ENCODE measurements at regions of chr17 and their contacts with region 1.

Region 1: DNA sequence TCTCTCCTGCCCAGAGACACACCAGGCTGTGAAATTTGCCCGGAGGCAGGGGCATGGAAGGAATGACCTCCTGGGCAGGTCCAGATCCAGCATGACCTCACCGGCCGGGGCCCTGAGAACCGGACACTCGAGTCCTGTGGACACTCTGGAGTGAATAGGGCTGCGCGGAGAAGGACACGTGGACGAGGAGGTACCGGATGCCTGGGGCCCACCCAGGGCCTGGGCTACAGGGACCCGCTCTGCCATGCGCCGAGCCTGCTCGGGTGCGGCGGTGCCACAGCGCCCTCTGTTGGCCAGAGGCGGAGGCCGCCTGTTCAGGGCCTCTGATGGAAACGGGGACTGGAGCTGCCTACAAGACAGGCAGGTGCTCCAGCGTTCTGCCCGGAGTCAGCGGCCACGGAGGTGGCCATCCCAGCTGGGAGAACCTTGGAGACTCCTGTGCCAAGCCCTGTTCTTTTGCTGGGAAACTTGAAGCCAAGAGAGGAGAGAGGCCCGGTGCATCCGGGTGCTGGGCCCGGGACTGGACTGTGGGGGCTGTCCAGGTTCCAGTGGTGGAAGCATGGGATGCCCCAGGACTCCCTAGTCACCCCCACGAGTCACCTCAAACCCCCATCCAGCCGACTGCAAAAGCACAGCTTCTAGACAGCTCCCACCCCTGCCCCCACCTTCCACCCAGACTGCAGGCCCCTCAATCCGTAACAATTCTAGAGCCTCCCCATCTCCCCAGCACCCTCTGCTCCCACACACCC is 19.3 kb upstream of the NXPH3 start:
- DNase-seq: no peak
- ATAC-seq: peak; percentile 99
- H3K4me3 ChIP-seq: no peak overlapping the region
- H3K27ac ChIP-seq: no peak overlapping the region
- H3K4me1 ChIP-seq: peaks cover 4% of the 10 kb centered on the region; the same call in 1 of the 2 replicates
- H3K27me3 ChIP-seq: no peaks in the 10 kb centered on the region
- CTCF ChIP-seq: peak; percentile 95 to 97 (median 96); a peak in 5 of 6 replicates
- EP300 ChIP-seq: no peak
- POLR2A ChIP-seq: no peak
- RAD21 ChIP-seq: peak; percentile 93

Region 2: GRCh38 chr17:49334744-49335512 is 221.5 kb before region 1 on chr17:
- CTCF ChIA-PET with region 1: no interaction called
- POLR2A ChIA-PET with region 1: no interaction called
- RAD21 ChIA-PET with region 1: no interaction called
- SMC1A ChIA-PET with region 1: no interaction called
- in situ Hi-C with region 1: no loop called
- intact Hi-C with region 1: no loop called
- DNase-seq: no peak
- ATAC-seq: no peak
- H3K4me3 ChIP-seq: no peak overlapping the region
- H3K27ac ChIP-seq: no peak overlapping the region
- H3K4me1 ChIP-seq: no peaks in the 10 kb centered on the region; the same call in 1 of the 2 replicates
- H3K27me3 ChIP-seq: no peaks in the 10 kb centered on the region
- CTCF ChIP-seq: no peak
- EP300 ChIP-seq: no peak
- POLR2A ChIP-seq: no peak
- RAD21 ChIP-seq: no peak

Region 3: GRCh38 chr17:49399995-49400394 is 156.4 kb before region 1 on chr17:
- CTCF ChIA-PET with region 1: interaction called, 119 read pairs
- POLR2A ChIA-PET with region 1: no interaction called
- RAD21 ChIA-PET with region 1: interaction called, 4 read pairs
- SMC1A ChIA-PET with region 1: no interaction called
- in situ Hi-C with region 1: loop called (anchors 10 kb)
- intact Hi-C with region 1: no loop called
- DNase-seq: no peak
- ATAC-seq: no peak
- H3K4me3 ChIP-seq: no peak overlapping the region
- H3K27ac ChIP-seq: no peak overlapping the region
- H3K4me1 ChIP-seq: peaks cover 6% of the 10 kb centered on the region
- H3K27me3 ChIP-seq: no peaks in the 10 kb centered on the region
- CTCF ChIP-seq: no peak
- EP300 ChIP-seq: no peak
- POLR2A ChIP-seq: no peak
- RAD21 ChIP-seq: no peak

Region 4: GRCh38 chr17:49425004-49425286 is 131.5 kb before region 1 on chr17:
- CTCF ChIA-PET with region 1: interaction called, 18 read pairs
- POLR2A ChIA-PET with region 1: no interaction called
- RAD21 ChIA-PET with region 1: no interaction called
- SMC1A ChIA-PET with region 1: no interaction called
- in situ Hi-C with region 1: no loop called
- intact Hi-C with region 1: no loop called
- DNase-seq: no peak
- ATAC-seq: no peak
- H3K4me3 ChIP-seq: no peak overlapping the region
- H3K27ac ChIP-seq: no peak overlapping the region
- H3K4me1 ChIP-seq: no peaks in the 10 kb centered on the region
- H3K27me3 ChIP-seq: no peaks in the 10 kb centered on the region
- CTCF ChIP-seq: no peak
- EP300 ChIP-seq: no peak
- POLR2A ChIP-seq: no peak
- RAD21 ChIP-seq: no peak

Region 5: GRCh38 chr17:49508061-49508865 is 48.1 kb before region 1 on chr17:
- CTCF ChIA-PET with region 1: interaction called, 10 read pairs
- POLR2A ChIA-PET with region 1: no interaction called
- RAD21 ChIA-PET with region 1: interaction called, 4 read pairs
- SMC1A ChIA-PET with region 1: no interaction called
- in situ Hi-C with region 1: no loop called
- intact Hi-C with region 1: no loop called
- DNase-seq: no peak
- ATAC-seq: peak; percentile 19; the same call in 2 of the 3 replicates
- H3K4me3 ChIP-seq: no peak overlapping the region
- H3K27ac ChIP-seq: no peak overlapping the region
- H3K4me1 ChIP-seq: no peaks in the 10 kb centered on the region
- H3K27me3 ChIP-seq: no peaks in the 10 kb centered on the region; a peak in 2 of 4 replicates
- CTCF ChIP-seq: no peak
- EP300 ChIP-seq: no peak
- POLR2A ChIP-seq: no peak
- RAD21 ChIP-seq: no peak

Region 6: GRCh38 chr17:49694847-49695683 is 138.7 kb after region 1 on chr17:
- CTCF ChIA-PET with region 1: interaction called, 37 read pairs
- POLR2A ChIA-PET with region 1: no interaction called
- RAD21 ChIA-PET with region 1: interaction called, 9 read pairs
- SMC1A ChIA-PET with region 1: interaction called, 10 read pairs
- in situ Hi-C with region 1: no loop called
- intact Hi-C with region 1: no loop called
- DNase-seq: no peak
- ATAC-seq: peak; percentile 71
- H3K4me3 ChIP-seq: no peak overlapping the region
- H3K27ac ChIP-seq: no peak overlapping the region
- H3K4me1 ChIP-seq: peaks cover 17% of the 10 kb centered on the region
- H3K27me3 ChIP-seq: no peaks in the 10 kb centered on the region
- CTCF ChIP-seq: peak; percentile 75 to 95 (median 93)
- EP300 ChIP-seq: no peak
- POLR2A ChIP-seq: no peak
- RAD21 ChIP-seq: peak; percentile 98

Region 7: DNA sequence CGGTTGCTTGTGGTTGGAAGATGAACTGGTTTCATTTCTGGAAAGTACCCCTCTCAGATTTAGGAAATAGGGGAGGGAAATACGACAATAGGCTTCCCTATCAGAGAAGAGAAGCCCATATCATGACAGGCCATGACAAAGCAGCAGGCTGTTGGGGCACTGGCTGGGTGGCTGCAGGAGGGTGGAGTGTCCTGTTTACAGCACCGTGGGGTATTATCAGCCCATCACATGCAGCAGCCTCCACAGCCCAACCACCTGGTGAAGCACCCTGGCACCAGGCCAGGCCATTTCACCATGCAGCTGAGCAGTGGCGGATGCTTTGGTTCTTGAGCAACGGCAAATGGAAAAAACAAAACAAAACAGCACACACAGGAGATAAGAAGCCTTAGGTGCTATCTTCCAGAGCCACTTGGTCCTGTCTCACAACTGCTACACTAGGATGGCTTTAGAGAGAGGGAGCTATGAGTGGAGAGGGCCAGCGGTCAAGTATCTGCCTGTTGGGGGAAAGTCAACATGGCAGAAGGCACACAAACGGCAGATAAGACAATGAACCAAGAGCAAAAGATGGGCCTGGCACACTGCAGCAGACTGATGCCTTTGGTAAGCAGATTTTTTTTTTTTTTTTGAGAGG is 183.4 kb after region 1 on chr17:
- CTCF ChIA-PET with region 1: no interaction called
- POLR2A ChIA-PET with region 1: no interaction called
- RAD21 ChIA-PET with region 1: no interaction called
- SMC1A ChIA-PET with region 1: no interaction called
- in situ Hi-C with region 1: no loop called
- intact Hi-C with region 1: no loop called
- DNase-seq: no peak
- ATAC-seq: peak; percentile 77
- H3K4me3 ChIP-seq: peak overlapping the region; percentile 31; the same call in 1 of the 2 replicates
- H3K27ac ChIP-seq: peak overlapping the region; percentile 79
- H3K4me1 ChIP-seq: peaks cover 44% of the 10 kb centered on the region
- H3K27me3 ChIP-seq: no peaks in the 10 kb centered on the region
- CTCF ChIP-seq: no peak
- EP300 ChIP-seq: 0 out of 4 replicates have a peak, but pooled peaks of 1 of the 2 experiments have one; percentile 13
- POLR2A ChIP-seq: peak; percentile 45; the same call in 1 of the 2 replicates
- RAD21 ChIP-seq: no peak